SK-N-SH (cell line): ENCODE measurements at regions of chr7 and their contacts with region 1.

Region 1: DNA sequence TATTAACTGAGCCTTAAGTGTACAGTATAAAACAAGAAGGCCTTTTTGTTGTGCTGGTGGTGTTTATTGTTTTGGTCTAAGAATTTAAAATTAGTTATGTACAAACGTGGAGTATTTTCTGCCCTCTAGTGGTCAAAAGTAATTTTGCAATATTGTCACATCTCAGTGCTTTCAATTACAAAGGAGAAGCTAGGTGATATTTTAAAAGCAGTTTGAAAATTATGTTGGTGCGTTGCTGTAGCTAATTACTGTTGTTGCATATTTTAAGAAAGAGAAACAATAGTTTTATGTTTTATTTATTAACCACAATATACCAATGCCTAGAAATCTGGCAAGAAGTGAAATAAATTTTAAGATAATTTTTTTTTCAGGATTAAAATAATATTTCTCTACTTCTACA is 11.4 kb downstream of the NPVF start:
- DNase-seq: peak; percentile 48
- H3K4me3 ChIP-seq: no peak overlapping the region; a peak in 1 of 4 replicates
- H3K27ac ChIP-seq: no peak overlapping the region
- H3K4me1 ChIP-seq: peaks cover 0 to 2% of the 10 kb centered on the region in 2 experiments; a peak in 1 of 4 replicates
- H3K27me3 ChIP-seq: peaks cover 8% of the 10 kb centered on the region; the same call in 1 of the 2 replicates
- CTCF ChIP-seq: peak; percentile 99
- EP300 ChIP-seq: no peak
- RAD21 ChIP-seq: peak; percentile 49; the same call in 1 of the 2 replicates

Region 2: DNA sequence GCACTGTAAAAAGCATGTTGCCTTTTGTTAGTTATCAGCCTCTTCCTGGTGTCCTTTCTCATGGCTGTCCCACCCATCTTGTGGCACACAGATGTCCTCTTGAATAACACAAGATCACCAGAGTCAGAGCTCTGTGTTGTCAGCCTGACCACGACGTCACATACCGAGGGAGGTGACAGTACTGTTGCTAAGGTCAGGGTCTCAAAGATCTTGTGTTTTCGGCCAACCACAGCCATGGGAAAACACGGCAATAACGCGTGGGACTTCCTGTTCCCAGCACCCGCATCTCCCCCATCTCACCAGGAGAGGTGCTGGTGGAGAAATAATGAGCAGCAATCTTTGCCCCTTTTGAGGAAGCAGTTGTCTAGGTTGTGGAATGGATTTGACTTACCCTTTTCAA is 28.9 kb before region 1 on chr7:
- CTCF ChIA-PET with region 1: interaction called, 12 read pairs
- POLR2A ChIA-PET with region 1: no interaction called
- DNase-seq: no peak
- H3K4me3 ChIP-seq: no peak overlapping the region
- H3K27ac ChIP-seq: no peak overlapping the region
- H3K4me1 ChIP-seq: no peaks in the 10 kb centered on the region
- H3K27me3 ChIP-seq: no peaks in the 10 kb centered on the region; the same call in 1 of the 2 replicates
- CTCF ChIP-seq: no peak
- EP300 ChIP-seq: no peak
- RAD21 ChIP-seq: no peak

Region 3: DNA sequence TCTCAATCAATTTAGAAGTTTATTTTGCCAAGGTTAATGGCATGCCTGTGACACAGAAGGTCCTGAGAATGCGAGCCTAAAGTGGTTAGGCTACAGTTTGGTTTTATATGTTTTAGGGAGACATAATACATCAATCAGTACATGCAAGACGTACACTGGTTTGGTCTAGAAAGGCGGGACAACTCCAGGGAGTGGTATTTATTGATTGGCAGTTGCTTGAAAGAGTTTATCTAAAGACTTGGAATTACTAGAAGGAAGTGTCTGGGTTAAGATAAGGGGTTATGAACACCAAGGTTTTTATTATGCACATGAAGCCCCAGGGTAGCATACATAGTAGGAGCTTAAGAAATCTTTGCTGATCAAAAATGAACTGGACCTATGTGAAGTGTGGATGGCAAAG is 10.1 kb before region 1 on chr7:
- CTCF ChIA-PET with region 1: interaction called, 55 read pairs
- POLR2A ChIA-PET with region 1: no interaction called
- DNase-seq: no peak
- H3K4me3 ChIP-seq: no peak overlapping the region
- H3K27ac ChIP-seq: no peak overlapping the region
- H3K4me1 ChIP-seq: no peaks in the 10 kb centered on the region
- H3K27me3 ChIP-seq: no peaks in the 10 kb centered on the region
- CTCF ChIP-seq: no peak
- EP300 ChIP-seq: no peak
- RAD21 ChIP-seq: no peak

Region 4: GRCh38 chr7:25234336-25234735 is 17.5 kb after region 1 on chr7:
- CTCF ChIA-PET with region 1: interaction called, 36 read pairs
- POLR2A ChIA-PET with region 1: no interaction called
- DNase-seq: no peak
- H3K4me3 ChIP-seq: no peak overlapping the region
- H3K27ac ChIP-seq: no peak overlapping the region
- H3K4me1 ChIP-seq: no peaks in the 10 kb centered on the region
- H3K27me3 ChIP-seq: no peaks in the 10 kb centered on the region
- CTCF ChIP-seq: no peak
- EP300 ChIP-seq: no peak
- RAD21 ChIP-seq: no peak

Region 5: GRCh38 chr7:25250386-25250785 is 33.5 kb after region 1 on chr7:
- CTCF ChIA-PET with region 1: interaction called, 14 read pairs
- POLR2A ChIA-PET with region 1: no interaction called
- DNase-seq: no peak
- H3K4me3 ChIP-seq: no peak overlapping the region
- H3K27ac ChIP-seq: no peak overlapping the region
- H3K4me1 ChIP-seq: no peaks in the 10 kb centered on the region; a peak in 1 of 4 replicates
- H3K27me3 ChIP-seq: no peaks in the 10 kb centered on the region
- CTCF ChIP-seq: no peak
- EP300 ChIP-seq: no peak
- RAD21 ChIP-seq: no peak